T-cell (primary cell): ENCODE measurements at regions of chr6 and their contacts with region 1.

Region 1: GRCh38 chr6:26122793-26123674 is 35.8 kb downstream of the HFE start:
- DNase-seq: peak; percentile 76 to 97 (median 91)
- ATAC-seq: peak; percentile 64 to 70 (median 68)
- H3K4me3 ChIP-seq: peak overlapping the region; percentile 88 to 100
- H3K4me3 Mint-ChIP-seq: peak overlapping the region; percentile 99 to 100 (median 99)
- H3K27ac ChIP-seq: peak overlapping the region; percentile 87
- H3K27ac Mint-ChIP-seq: peak overlapping the region; percentile 99
- H3K4me1 ChIP-seq: peaks cover 10 to 15% of the 10 kb centered on the region in 2 experiments
- H3K4me1 Mint-ChIP-seq: peaks cover 32 to 47% (median 35%) of the 10 kb centered on the region in 3 donors
- H3K27me3 ChIP-seq: no peaks in the 10 kb centered on the region
- H3K27me3 Mint-ChIP-seq: no peaks in the 10 kb centered on the region

Region 2: GRCh38 chr6:26031595-26032339 is 91.3 kb before region 1 on chr6:
- CTCF ChIA-PET with region 1: interaction called in 1 of 2 experiments, 8 read pairs
- POLR2A ChIA-PET with region 1: interaction called, 23 to 51 read pairs
- DNase-seq: peak; percentile 61 to 95 (median 87)
- ATAC-seq: peak; percentile 68 to 72 (median 70)
- H3K4me3 ChIP-seq: peak overlapping the region; percentile 61 to 84
- H3K4me3 Mint-ChIP-seq: peak overlapping the region; percentile 90 to 95 (median 92)
- H3K27ac ChIP-seq: peak overlapping the region; percentile 74
- H3K27ac Mint-ChIP-seq: peak overlapping the region; percentile 94 to 98
- H3K4me1 ChIP-seq: peaks cover 30 to 32% of the 10 kb centered on the region in 2 experiments
- H3K4me1 Mint-ChIP-seq: peaks cover 48 to 53% (median 50%) of the 10 kb centered on the region in 3 donors
- H3K27me3 ChIP-seq: no peaks in the 10 kb centered on the region
- H3K27me3 Mint-ChIP-seq: peaks cover 0 to 2% of the 10 kb centered on the region in 2 donors

Region 3: DNA sequence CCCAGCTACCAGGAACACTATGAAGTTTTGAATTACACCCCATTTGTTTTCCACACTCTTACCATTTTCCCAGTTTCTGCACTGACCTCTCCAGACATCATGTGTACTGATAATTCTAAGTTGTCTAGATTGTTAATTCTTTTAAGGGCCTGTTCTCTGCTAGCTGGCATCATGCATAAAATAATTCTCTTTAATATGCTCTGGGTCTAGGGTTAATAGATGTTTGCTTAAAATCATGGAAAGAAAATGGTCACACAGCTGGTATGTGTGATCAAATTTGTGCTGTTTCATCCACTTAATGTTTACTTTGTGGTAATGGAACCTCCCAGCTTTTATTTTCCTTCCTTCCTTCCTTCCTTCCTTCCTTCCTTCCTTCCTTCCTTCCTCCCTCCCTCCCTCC is 13.3 kb after region 1 on chr6:
- CTCF ChIA-PET with region 1: interaction called in 1 of 2 experiments, 9 read pairs
- POLR2A ChIA-PET with region 1: interaction called, 8 to 17 read pairs
- DNase-seq: no peak
- ATAC-seq: no peak
- H3K4me3 ChIP-seq: no peak overlapping the region
- H3K4me3 Mint-ChIP-seq: no peak overlapping the region
- H3K27ac ChIP-seq: no peak overlapping the region
- H3K27ac Mint-ChIP-seq: peak overlapping the region; percentile 36 to 61
- H3K4me1 ChIP-seq: peaks cover 0 to 16% of the 10 kb centered on the region in 2 experiments
- H3K4me1 Mint-ChIP-seq: peaks cover 33 to 56% (median 41%) of the 10 kb centered on the region in 3 donors
- H3K27me3 ChIP-seq: no peaks in the 10 kb centered on the region
- H3K27me3 Mint-ChIP-seq: no peaks in the 10 kb centered on the region

Region 4: GRCh38 chr6:26204332-26205165 is 81.5 kb after region 1 on chr6:
- CTCF ChIA-PET with region 1: interaction called in 1 of 2 experiments, 8 read pairs
- POLR2A ChIA-PET with region 1: interaction called, 43 to 184 read pairs
- DNase-seq: peak; percentile 73 to 96 (median 82)
- ATAC-seq: peak; percentile 63 to 70 (median 68)
- H3K4me3 ChIP-seq: peak overlapping the region; percentile 73 to 98
- H3K4me3 Mint-ChIP-seq: no peak overlapping the region
- H3K27ac ChIP-seq: peak overlapping the region; percentile 93
- H3K27ac Mint-ChIP-seq: no peak overlapping the region
- H3K4me1 ChIP-seq: peaks cover 23 to 37% of the 10 kb centered on the region in 2 experiments
- H3K4me1 Mint-ChIP-seq: peaks cover 17 to 28% (median 24%) of the 10 kb centered on the region in 3 donors
- H3K27me3 ChIP-seq: no peaks in the 10 kb centered on the region
- H3K27me3 Mint-ChIP-seq: no peaks in the 10 kb centered on the region

Region 5: DNA sequence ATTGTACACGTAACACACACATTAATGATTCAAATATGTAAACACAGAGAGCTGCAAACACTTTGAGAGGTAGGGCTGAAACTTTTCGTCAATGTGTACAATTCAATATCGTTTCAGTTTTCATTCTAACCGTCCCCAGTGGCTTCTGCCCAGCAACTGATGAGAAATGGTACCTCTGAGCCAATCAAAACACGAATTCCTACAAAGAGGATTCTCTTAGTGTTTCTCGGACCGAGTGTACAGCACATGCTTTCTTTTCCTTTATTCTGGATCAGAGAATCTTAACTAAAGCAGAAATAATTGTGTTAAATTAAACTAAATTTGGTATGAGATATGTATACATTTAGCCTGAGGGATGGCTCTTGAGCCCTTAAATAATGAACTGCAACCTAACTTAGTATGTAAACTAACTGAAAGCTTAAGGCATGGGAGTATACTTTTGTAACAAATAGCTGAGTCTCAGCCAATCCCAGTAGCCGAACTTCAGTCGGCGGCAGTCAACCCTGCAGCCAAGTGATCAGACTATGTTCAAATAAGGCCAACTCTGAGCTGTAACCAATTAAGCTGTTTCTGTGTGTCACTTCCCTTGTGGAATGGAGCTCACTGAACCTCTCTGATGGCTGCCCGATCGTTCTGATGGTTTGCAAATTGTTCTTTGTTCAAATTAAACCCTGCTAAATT is 350.9 kb after region 1 on chr6:
- CTCF ChIA-PET with region 1: no interaction called
- POLR2A ChIA-PET with region 1: interaction called in 1 of 2 experiments, 13 read pairs
- DNase-seq: peak; percentile 50 to 93 (median 81)
- ATAC-seq: peak; percentile 95 to 96 (median 96)
- H3K4me3 ChIP-seq: peak overlapping the region; percentile 44 to 52
- H3K4me3 Mint-ChIP-seq: peak overlapping the region; percentile 88 to 99 (median 97)
- H3K27ac ChIP-seq: peak overlapping the region; percentile 90
- H3K27ac Mint-ChIP-seq: peak overlapping the region; percentile 100
- H3K4me1 ChIP-seq: peaks cover 25 to 43% of the 10 kb centered on the region in 2 experiments
- H3K4me1 Mint-ChIP-seq: peaks cover 63 to 66% (median 65%) of the 10 kb centered on the region in 3 donors
- H3K27me3 ChIP-seq: no peaks in the 10 kb centered on the region
- H3K27me3 Mint-ChIP-seq: no peaks in the 10 kb centered on the region

Region 6: DNA sequence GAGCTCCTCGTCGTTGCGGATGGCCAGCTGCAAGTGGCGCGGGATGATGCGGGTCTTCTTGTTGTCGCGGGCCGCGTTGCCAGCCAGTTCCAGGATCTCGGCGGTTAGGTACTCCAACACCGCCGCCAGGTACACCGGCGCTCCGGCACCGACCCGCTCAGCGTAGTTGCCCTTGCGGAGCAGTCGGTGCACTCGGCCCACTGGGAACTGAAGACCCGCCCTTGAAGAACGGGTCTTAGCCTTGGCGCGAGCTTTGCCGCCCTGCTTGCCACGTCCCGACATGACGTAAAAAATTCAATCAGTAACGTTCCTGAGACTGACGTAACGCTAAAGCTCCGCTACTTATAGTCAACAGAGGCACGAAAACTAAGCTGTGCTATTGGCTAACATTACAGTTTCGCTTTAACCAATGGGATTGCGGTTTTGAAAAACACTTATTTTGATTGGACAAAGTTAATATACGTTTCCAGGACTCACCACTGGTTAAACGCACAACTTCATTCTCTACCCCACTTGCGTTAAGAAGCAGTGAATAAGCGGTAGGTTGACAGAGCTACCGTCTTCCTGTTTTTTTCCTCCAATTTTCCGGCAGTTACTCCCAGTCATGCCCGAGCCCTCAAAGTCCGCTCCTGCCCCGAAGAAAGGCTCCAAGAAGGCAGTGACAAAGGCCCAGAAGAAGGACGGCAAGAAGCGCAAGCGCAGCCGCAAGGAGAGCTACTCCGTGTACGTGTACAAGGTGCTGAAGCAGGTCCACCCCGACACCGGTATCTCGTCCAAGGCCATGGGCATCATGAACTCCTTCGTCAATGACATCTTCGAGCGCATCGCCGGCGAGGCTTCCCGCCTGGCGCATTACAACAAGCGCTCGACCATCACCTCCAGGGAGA is 1715.3 kb after region 1 on chr6:
- CTCF ChIA-PET with region 1: no interaction called
- POLR2A ChIA-PET with region 1: interaction called, 3 to 19 read pairs
- DNase-seq: peak; percentile 62 to 97 (median 79)
- ATAC-seq: peak; percentile 80 to 83 (median 82)
- H3K4me3 ChIP-seq: peak overlapping the region; percentile 86 to 87
- H3K4me3 Mint-ChIP-seq: no peak overlapping the region
- H3K27ac ChIP-seq: peak overlapping the region; percentile 99
- H3K27ac Mint-ChIP-seq: no peak overlapping the region
- H3K4me1 ChIP-seq: peaks cover 14 to 28% of the 10 kb centered on the region in 2 experiments
- H3K4me1 Mint-ChIP-seq: peaks cover 9 to 20% (median 9%) of the 10 kb centered on the region in 3 donors
- H3K27me3 ChIP-seq: peaks cover 0 to 8% of the 10 kb centered on the region in 2 experiments
- H3K27me3 Mint-ChIP-seq: peaks cover 4 to 7% of the 10 kb centered on the region in 2 donors